ENCODE measurements at regions of chr22 and their contacts with region 1.

Region 1: DNA sequence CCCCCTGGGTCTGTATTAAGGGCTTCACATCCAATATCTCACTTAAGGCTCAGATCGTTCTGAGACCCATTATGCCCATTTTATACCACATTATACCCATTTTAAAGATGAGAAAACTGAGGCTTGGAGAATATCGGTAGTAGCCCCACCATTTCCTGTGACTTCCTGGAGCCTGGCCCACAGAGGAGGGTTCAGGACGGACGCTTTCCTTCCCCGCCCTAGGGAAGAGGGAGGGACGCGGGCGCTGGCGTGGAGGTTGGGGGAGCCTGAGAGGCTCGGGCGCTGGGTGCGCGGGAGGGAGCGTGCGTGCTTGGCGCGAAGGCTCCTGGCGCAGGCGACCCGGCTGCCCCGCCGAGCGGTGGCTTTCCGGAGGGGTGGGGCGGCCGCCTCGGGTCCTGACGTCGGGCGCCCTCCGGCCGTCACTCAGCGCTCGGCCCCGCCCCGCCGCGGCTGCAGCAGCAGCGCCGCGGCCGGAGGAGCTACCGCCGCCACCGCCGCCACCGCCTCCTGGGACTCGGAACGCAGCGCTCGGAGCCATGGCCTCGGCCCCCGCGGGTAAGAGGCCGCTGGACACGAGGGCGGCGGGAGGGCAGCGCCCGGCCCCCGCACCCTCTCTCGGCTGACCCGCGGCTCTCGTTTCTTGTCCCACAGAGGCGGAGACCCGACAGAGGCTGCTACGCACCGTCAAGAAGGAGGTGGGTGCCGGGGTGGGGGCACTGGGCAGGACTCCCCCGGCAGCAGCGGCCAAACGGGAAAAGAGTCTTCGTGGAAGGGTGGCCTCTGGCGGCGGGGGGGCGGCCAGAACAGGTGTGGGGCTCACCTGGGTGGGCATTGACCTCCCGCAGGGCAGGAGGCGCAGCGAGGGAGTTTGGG is at the start of gene SGSM1:
- DNase-seq: peak; percentile 75 to 93
- H3K4me3 ChIP-seq: peak within 1 kb of the TSS; percentile 80 to 81
- H3K27ac ChIP-seq: peak within 1 kb of the TSS; percentile 94 to 97
- H3K4me1 ChIP-seq: peaks cover 0 to 52% (median 40%) of the 10 kb centered on the region in 4 donors
- H3K27me3 ChIP-seq: no peaks in the 10 kb centered on the region
- CTCF ChIP-seq: no peak

Region 2: DNA sequence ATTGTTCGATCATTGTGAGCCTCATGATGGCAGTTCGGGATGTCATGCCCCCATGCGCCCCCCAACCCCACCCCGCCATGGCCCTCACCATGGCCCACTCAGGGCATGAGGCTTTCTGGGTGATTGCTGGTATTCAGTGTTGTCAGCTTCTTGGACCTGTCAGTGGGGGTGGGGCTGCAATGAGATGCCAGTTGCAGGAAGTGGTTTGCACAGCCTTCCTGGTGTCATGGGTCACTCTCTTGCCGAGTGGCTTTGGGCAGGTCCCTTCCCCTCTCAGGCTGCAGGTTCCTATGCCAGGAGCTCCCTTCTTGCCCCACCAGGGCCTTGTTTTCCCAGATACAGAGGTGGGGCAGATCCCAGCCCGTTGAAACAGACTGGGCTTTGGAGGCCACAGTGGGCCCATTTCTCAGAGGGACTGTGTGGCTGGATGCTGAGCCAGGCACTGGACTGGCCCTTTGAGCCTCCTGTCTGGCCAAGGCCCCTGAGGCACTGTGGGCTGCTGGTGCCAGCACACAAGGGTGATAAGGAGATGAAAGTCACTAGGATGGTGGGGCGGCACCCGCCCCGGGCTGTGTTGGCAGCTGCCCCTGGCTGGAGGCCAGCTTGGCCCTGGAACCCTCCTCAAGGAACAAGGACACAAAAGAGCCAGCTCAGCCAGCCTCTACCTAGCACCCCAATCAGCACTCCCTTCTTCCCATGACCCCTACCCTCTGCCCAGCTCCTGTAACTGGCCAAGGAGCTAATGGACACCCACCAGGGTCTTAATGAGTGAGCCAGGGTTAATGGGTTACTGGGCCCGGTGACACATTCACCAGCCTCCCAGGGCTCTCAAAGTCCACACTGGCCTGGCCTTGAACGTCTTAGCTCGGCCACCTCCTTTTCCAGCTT is 204.6 kb before region 1 on chr22:
- intact Hi-C with region 1: no loop called
- DNase-seq: no peak
- H3K4me3 ChIP-seq: no peak overlapping the region
- H3K27ac ChIP-seq: no peak overlapping the region
- H3K4me1 ChIP-seq: peaks cover 0 to 25% (median 2%) of the 10 kb centered on the region in 4 donors
- H3K27me3 ChIP-seq: no peaks in the 10 kb centered on the region
- CTCF ChIP-seq: no peak

Region 3: GRCh38 chr22:24894220-24894975 is 88.4 kb after region 1 on chr22:
- intact Hi-C with region 1: loop called (anchors 5 kb)
- DNase-seq: peak; percentile 91 to 97
- H3K4me3 ChIP-seq: peak overlapping the region in 1 of 2 donors; percentile 20
- H3K27ac ChIP-seq: peak overlapping the region; percentile 73 to 77
- H3K4me1 ChIP-seq: peaks cover 0 to 27% (median 16%) of the 10 kb centered on the region in 4 donors
- H3K27me3 ChIP-seq: no peaks in the 10 kb centered on the region
- CTCF ChIP-seq: no peak

Measured in tibial artery (tissue), 4 donors.